Left ventricle myocardium inferior (tissue), 1 donor: ENCODE measurements at regions of chrX and their contacts with region 1.

Region 1: GRCh38 chrX:17237146-17237545 is 137.9 kb upstream of the NHS start:
- DNase-seq: no peak
- H3K4me3 ChIP-seq: no peak overlapping the region
- H3K27ac ChIP-seq: no peak overlapping the region
- H3K4me1 ChIP-seq: no peaks in the 10 kb centered on the region
- H3K27me3 ChIP-seq: no peaks in the 10 kb centered on the region
- CTCF ChIP-seq: no peak

Region 2: GRCh38 chrX:17336377-17336776 is 99.2 kb after region 1 on chrX:
- intact Hi-C with region 1: no loop called
- DNase-seq: no peak
- H3K4me3 ChIP-seq: no peak overlapping the region
- H3K27ac ChIP-seq: no peak overlapping the region
- H3K4me1 ChIP-seq: no peaks in the 10 kb centered on the region
- H3K27me3 ChIP-seq: no peaks in the 10 kb centered on the region
- CTCF ChIP-seq: no peak

Region 3: DNA sequence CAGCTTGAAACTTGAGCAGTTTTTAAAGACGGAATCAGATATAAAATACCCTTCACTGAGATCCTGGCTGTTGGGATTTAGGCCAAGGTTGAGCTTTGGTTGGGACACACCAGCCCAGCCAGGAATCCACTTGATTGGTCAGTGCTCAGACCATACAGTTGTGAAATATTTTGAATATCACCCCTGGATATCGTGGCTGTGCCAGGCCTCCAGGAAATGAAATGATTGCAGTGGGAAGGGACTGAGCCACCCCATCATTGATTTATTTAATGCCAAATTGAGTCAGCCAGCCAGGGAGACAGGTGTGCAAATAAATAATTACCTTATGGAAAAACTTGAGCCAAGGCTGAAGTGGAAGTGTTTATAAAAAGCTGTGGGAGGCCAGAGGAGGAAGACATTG is 371.8 kb after region 1 on chrX:
- intact Hi-C with region 1: loop called (anchors 5 kb)
- DNase-seq: no peak
- H3K4me3 ChIP-seq: no peak overlapping the region
- H3K27ac ChIP-seq: no peak overlapping the region
- H3K4me1 ChIP-seq: no peaks in the 10 kb centered on the region
- H3K27me3 ChIP-seq: no peaks in the 10 kb centered on the region
- CTCF ChIP-seq: no peak